HepG2 (cell line): ENCODE measurements at regions of chr10 and their contacts with region 1.

Region 1: DNA sequence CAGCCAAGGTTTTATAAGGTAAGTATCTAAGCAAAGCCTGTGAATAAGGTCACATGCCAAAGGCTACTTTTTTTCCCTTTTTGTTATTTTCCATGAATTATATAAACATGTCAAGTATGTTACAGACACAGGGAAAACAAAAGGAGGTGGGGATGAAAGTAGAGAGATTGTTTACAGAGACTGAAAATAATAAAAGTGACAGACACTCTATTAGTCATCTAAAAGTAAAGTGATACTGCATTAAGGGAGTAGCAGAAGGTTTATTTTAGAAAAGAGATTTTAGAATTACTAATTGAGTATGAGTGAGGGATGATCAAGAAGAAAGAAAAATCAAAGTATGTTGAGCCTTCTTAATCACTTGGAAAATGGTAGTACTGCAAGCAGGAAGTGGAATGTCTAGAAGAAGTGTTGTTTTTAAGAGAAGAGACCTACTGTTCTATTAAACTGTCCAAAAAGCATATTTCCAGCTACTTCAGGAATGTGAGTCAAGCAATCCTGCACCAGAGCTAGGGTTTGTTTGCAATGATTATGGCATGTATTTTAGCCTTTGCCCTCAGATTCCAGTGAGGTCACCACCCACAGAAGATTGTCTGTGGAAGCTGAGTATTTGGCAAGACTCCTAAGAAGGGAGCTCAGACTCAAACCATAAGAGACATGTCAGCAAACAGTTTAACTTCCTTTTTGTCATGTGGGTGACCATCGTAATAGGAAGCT is 177.9 kb upstream of the PLXDC2 start:
- DNase-seq: peak; percentile 66
- ATAC-seq: peak; percentile 92
- H3K4me3 ChIP-seq: peak overlapping the region in 2 of 3 experiments; percentile 6 to 32; a peak in 3 of 6 replicates
- H3K27ac ChIP-seq: peak overlapping the region; percentile 1
- H3K4me1 ChIP-seq: peaks cover 19% of the 10 kb centered on the region
- H3K27me3 ChIP-seq: no peaks in the 10 kb centered on the region
- CTCF ChIP-seq: no peak
- EP300 ChIP-seq: no peak
- POLR2A ChIP-seq: no peak
- RAD21 ChIP-seq: no peak

Region 2: GRCh38 chr10:20598590-20598989 is 960.3 kb after region 1 on chr10:
- CTCF ChIA-PET with region 1: no interaction called
- POLR2A ChIA-PET with region 1: no interaction called
- in situ Hi-C with region 1: no loop called
- intact Hi-C with region 1: loop called (anchors 5 kb)
- DNase-seq: no peak
- ATAC-seq: no peak
- H3K4me3 ChIP-seq: no peak overlapping the region
- H3K27ac ChIP-seq: no peak overlapping the region
- H3K4me1 ChIP-seq: no peaks in the 10 kb centered on the region
- H3K27me3 ChIP-seq: no peaks in the 10 kb centered on the region
- CTCF ChIP-seq: no peak
- EP300 ChIP-seq: no peak
- POLR2A ChIP-seq: no peak
- RAD21 ChIP-seq: no peak